Mucosa of descending colon (tissue), 3 donors: ENCODE measurements at regions of chr14 and their contacts with region 1.

Region 1: DNA sequence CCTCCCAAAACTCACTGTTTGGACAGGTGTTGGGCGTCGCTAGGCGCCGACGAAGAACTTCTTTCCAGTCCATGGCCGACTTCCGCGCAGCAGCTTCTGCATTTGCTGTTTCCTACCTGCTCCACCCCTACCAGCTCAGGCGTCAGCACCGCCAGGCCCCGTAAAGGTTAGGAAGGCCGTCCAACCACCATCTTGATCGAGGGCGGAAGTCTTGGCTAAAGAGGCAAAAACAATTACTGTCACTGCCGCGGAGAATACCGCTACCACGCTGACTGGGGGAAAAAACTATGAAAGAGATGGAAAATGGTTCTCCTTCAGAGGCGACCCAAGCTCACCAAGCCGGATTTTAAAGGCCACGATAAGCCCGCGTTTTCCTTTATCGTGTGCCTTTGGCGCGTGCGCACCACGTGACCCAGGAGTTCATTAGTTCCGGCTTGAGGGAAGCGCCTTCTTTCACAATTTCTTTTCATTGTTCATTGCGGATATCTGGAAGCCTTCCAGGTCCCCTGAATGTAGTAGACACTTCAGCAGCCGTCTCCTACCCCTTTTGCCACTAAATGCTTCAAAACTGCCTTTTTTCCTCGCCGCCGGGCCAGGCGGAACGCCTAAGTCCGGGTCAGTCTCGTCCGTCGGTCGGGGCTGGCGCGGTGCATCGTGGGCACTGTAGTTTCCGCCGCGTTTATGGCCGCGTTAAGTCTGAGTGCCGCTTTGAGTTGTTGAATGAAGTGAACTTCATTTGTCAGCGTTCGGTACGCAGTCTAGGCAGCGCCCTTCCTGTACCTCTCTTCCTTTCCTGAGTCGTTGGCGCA is at the starts of genes PPP2R3C and PRORP:
- DNase-seq: peak; percentile 92 to 97 (median 93)
- ATAC-seq: peak; percentile 92
- H3K4me3 ChIP-seq: peak within 1 kb of the TSS; percentile 31
- H3K4me1 ChIP-seq: peaks cover 25% of the 10 kb centered on the region
- CTCF ChIP-seq: no peak
- total RNA-seq, gene PPP2R3C: 21.5 to 35.5 (median 23.0) TPM
- total RNA-seq, gene PRORP: 18.6 to 30.7 (median 27.5) TPM

Region 2: GRCh38 chr14:34982417-34983147 is 139.5 kb before region 1 on chr14 and contains the start of gene SRP54:
- intact Hi-C with region 1: loop called in 1 of 2 experiments (anchors 10 kb)
- DNase-seq: peak; percentile 99 to 100 (median 99)
- ATAC-seq: peak; percentile 96
- H3K4me3 ChIP-seq: peak within 1 kb of the TSS; percentile 37
- H3K4me1 ChIP-seq: peaks cover 24% of the 10 kb centered on the region
- CTCF ChIP-seq: no peak
- total RNA-seq, gene SRP54: 32.9 to 45.6 (median 40.6) TPM